ENCODE measurements at regions of chr11 and their contacts with region 1.

Region 1: GRCh38 chr11:73393479-73394380 is 17.5 kb downstream of the RELT start:
- DNase-seq: no peak
- H3K4me3 ChIP-seq: no peak overlapping the region
- H3K27ac ChIP-seq: no peak overlapping the region
- H3K4me1 ChIP-seq: peaks cover 8 to 19% (median 10%) of the 10 kb centered on the region in 4 donors
- H3K27me3 ChIP-seq: no peaks in the 10 kb centered on the region
- CTCF ChIP-seq: peak; percentile 67 to 83 (median 83)
- EP300 ChIP-seq: no peak
- POLR2A ChIP-seq: no peak

Region 2: DNA sequence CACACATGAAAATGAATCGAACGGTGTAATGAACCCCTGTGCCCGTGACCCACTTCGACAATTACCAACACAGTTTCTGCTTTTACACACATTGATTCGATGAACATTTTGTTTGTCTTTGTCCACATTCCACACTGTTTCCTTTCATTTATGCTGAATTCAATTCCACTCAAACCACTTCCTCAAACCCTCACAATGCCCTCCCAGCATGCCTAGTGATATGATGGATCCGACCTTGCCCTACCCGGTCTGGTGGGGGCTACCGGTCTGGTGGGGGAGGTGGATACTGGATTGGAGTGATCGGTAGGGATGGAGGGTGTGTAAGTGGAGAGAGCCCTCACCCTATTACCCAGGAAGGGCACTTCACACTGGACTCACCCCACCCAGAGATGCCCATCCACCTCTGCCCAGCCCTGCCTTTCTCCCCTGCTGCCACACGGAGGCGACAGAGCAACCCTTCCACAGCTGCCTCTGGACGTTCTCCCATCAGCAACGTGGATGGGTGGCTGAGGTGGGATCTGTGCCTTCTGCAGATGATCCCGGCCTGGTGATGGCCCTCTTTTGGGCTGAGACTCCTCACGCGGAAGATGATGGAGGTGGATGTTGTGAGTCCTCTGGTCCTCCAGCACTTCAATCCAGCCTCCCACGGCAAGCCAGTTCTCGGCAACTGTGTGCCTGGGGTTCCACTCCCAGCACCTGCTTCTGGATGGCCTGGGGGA is 208.6 kb before region 1 on chr11:
- intact Hi-C with region 1: loop called (anchors 10 kb)
- DNase-seq: no peak
- H3K4me3 ChIP-seq: no peak overlapping the region
- H3K27ac ChIP-seq: no peak overlapping the region
- H3K4me1 ChIP-seq: peaks cover 10 to 20% (median 12%) of the 10 kb centered on the region in 4 donors
- H3K27me3 ChIP-seq: peaks cover 0 to 5% (median 0%) of the 10 kb centered on the region in 4 donors
- CTCF ChIP-seq: peak; percentile 70 to 90 (median 75)
- EP300 ChIP-seq: no peak
- POLR2A ChIP-seq: no peak

Region 3: DNA sequence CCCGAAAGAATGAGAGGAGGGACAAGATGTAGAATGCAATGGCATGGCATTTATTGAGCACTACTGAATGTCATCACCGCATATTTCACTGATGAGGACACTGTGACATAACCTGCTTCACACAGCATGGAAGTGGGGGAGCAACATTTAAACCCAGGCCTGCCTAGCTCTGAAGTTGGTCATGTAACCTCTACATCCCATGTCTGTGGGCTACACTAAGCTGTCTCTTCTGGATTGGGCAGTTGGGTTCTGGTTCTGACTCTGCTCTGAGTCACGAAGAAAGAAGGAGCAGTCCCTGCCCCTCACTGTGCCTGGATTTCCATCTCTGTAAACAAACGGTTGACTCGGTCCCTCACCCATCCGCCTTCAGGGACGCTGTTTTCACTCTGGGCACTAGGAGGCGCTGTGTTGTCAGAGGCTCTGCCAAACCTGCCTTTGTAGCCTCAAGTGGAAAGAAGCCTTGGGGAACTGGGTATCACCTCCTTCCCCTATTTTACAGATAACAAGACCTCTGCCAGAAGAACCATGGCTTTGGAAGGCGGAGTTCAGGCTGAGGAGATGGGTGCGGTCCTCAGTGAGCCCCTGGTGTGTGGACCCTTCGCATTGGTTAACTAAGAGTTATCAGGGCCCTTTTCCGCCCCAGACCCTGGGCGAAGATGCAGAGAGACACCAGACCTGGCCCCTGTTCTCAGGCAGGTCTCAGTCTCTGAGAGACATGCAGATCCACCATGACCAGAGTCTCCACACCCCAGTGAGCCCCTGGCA is 98.3 kb before region 1 on chr11:
- intact Hi-C with region 1: loop called (anchors 5 kb)
- DNase-seq: no peak
- H3K4me3 ChIP-seq: no peak overlapping the region
- H3K27ac ChIP-seq: no peak overlapping the region
- H3K4me1 ChIP-seq: peaks cover 4 to 9% (median 6%) of the 10 kb centered on the region in 4 donors
- H3K27me3 ChIP-seq: no peaks in the 10 kb centered on the region
- CTCF ChIP-seq: peak; percentile 81 to 90 (median 85)
- EP300 ChIP-seq: no peak
- POLR2A ChIP-seq: no peak

Region 4: GRCh38 chr11:73340164-73340563 is 53.6 kb before region 1 on chr11:
- intact Hi-C with region 1: no loop called
- DNase-seq: no peak
- H3K4me3 ChIP-seq: no peak overlapping the region
- H3K27ac ChIP-seq: peak overlapping the region; percentile 70 to 90 (median 82)
- H3K4me1 ChIP-seq: peaks cover 50 to 100% (median 100%) of the 10 kb centered on the region in 4 donors
- H3K27me3 ChIP-seq: no peaks in the 10 kb centered on the region
- CTCF ChIP-seq: no peak
- EP300 ChIP-seq: no peak
- POLR2A ChIP-seq: no peak

Region 5: DNA sequence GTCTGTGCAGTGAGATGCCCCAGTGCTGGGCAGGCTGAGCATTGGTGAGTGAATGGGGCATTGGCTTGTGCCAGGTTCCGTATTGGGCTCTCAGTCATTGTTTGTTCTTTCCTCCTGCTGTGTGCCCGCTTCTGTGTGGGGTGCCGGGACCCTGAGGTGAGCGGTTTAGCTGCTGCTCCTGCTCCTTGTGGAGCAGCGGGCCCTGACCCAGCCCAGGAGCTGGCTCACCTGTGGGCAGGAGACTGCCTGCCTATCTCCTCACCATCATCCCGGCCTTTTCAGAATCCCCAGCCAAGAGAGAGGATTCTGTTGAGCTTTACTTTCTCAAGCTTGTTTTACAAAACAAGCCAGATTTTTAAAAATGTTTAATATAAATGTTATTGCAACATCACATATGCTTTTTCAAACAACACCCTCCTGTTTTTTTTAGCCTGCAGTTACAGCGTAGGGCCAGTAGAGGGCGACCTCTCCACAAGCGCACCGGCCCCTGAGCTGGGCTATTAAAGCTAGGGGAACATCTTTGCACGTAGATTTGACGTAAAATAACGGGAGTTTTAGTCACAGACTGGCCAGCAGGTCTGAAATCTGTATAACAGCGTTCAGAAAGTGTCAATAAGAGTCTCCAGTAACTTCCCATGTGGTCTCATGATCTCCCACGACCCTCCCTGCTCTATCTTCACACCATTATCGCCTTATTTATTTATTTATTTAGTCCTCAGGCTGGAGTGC is 42.7 kb before region 1 on chr11:
- intact Hi-C with region 1: loop called (anchors 2 kb)
- DNase-seq: no peak
- H3K4me3 ChIP-seq: no peak overlapping the region
- H3K27ac ChIP-seq: peak overlapping the region; percentile 59 to 71 (median 66)
- H3K4me1 ChIP-seq: peaks cover 0 to 39% (median 34%) of the 10 kb centered on the region in 4 donors
- H3K27me3 ChIP-seq: no peaks in the 10 kb centered on the region
- CTCF ChIP-seq: peak; percentile 93 to 98 (median 97)
- EP300 ChIP-seq: no peak
- POLR2A ChIP-seq: no peak

Measured in esophagus muscularis mucosa (tissue), 4 donors.